CD14-positive monocyte (primary cell): ENCODE measurements at regions of chr3 and their contacts with region 1.

Region 1: GRCh38 chr3:71725279-71725991 is at the start of gene EIF4E3:
- DNase-seq: peak in 2 of 3 donors; percentile 44 to 62
- H3K4me3 ChIP-seq: peak within 1 kb of the TSS; percentile 60 to 97 (median 94)
- H3K4me3 Mint-ChIP-seq: peak within 1 kb of the TSS; percentile 89 to 93
- H3K27ac ChIP-seq: peak within 1 kb of the TSS; percentile 51 to 91
- H3K27ac Mint-ChIP-seq: peak within 1 kb of the TSS; percentile 84 to 97 (median 94)
- H3K4me1 ChIP-seq: peaks cover 54 to 65% of the 10 kb centered on the region in 2 donors
- H3K4me1 Mint-ChIP-seq: peaks cover 68% of the 10 kb centered on the region
- H3K27me3 ChIP-seq: peaks cover 0 to 3% of the 10 kb centered on the region in 2 donors
- H3K27me3 Mint-ChIP-seq: peaks cover under 1 to 6% (median 4%) of the 10 kb centered on the region in 3 donors
- CTCF ChIP-seq: no peak
- polyA plus RNA-seq, gene EIF4E3: 35.6 to 111 (median 58.6) TPM

Region 2: DNA sequence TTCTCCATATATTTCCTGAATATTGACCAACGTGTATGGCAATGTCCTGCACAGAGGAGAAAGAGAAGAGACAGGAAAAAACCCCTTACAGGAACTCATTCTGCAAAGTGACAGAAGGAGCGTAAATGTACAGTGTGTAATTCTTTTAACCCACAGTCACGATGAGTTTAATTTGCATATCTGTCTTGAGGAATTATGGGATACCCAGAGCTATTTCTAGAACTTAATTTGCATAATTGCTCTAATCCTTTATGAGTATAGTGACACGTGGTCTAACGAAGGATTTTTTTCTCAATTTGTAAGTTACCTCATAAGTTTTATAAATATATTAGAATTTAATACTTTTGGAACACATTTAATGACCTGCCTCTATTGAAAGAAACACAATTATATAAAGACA is 38.0 kb after region 1 on chr3:
- intact Hi-C with region 1: loop called in 1 of 2 experiments (anchors 5 kb)
- DNase-seq: no peak
- H3K4me3 ChIP-seq: no peak overlapping the region
- H3K4me3 Mint-ChIP-seq: no peak overlapping the region
- H3K27ac ChIP-seq: no peak overlapping the region
- H3K27ac Mint-ChIP-seq: no peak overlapping the region
- H3K4me1 ChIP-seq: peaks cover 9 to 19% of the 10 kb centered on the region in 2 donors
- H3K4me1 Mint-ChIP-seq: peaks cover 22% of the 10 kb centered on the region
- H3K27me3 ChIP-seq: no peaks in the 10 kb centered on the region
- H3K27me3 Mint-ChIP-seq: peaks cover 0 to 7% (median 2%) of the 10 kb centered on the region in 3 donors
- CTCF ChIP-seq: no peak

Region 3: DNA sequence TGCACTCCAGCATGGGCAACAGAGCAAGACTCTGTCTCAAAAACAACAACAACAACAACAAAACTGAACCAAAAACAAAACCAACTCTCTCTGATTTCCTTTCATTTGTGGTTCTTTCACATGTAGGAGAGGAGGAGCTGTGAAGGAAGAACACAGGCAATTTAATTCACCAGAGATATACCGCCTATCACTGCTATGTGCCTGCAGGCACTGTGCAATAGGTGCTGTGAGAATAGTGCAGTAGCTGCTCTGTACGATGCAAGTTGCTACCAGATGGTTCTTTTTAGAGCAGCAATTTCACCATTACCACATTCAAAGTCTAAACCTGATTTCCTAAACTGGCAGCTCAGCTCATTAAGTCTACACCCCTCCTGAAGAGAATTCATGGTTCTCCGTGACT is 70.9 kb after region 1 on chr3:
- intact Hi-C with region 1: no loop called
- DNase-seq: no peak
- H3K4me3 ChIP-seq: no peak overlapping the region
- H3K4me3 Mint-ChIP-seq: no peak overlapping the region
- H3K27ac ChIP-seq: no peak overlapping the region
- H3K27ac Mint-ChIP-seq: no peak overlapping the region
- H3K4me1 ChIP-seq: peaks cover 0 to 16% of the 10 kb centered on the region in 2 donors
- H3K4me1 Mint-ChIP-seq: peaks cover 23% of the 10 kb centered on the region
- H3K27me3 ChIP-seq: no peaks in the 10 kb centered on the region
- H3K27me3 Mint-ChIP-seq: peaks cover 1 to 9% (median 2%) of the 10 kb centered on the region in 3 donors
- CTCF ChIP-seq: no peak

Region 4: DNA sequence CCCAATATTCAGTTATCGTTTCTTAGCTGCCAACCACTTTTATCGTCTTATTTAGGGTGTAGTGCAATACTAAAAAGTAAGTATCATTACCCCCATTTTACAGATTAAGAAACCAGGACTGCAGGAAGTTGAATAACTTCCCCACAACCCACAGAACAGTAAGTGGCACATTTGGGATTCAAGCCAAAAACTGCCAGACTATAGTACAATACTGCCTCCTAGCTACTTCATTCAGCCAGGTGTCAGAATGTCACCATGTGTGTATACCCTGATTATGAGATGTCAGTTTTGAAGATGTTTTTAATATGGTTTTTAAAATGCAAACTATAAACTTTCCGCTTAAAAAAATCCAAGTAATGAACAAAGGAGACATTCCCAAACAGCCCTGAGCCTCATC is 133.7 kb after region 1 on chr3:
- intact Hi-C with region 1: loop called (anchors 5 kb)
- DNase-seq: peak; percentile 78 to 93 (median 83)
- H3K4me3 ChIP-seq: peak overlapping the region in 1 of 3 experiments; percentile 26
- H3K4me3 Mint-ChIP-seq: peak overlapping the region; percentile 6 to 57
- H3K27ac ChIP-seq: peak overlapping the region in 1 of 2 donors; percentile 18
- H3K27ac Mint-ChIP-seq: peak overlapping the region; percentile 73 to 95 (median 84)
- H3K4me1 ChIP-seq: peaks cover 14 to 27% of the 10 kb centered on the region in 2 donors
- H3K4me1 Mint-ChIP-seq: peaks cover 28% of the 10 kb centered on the region
- H3K27me3 ChIP-seq: peaks cover under 1 to 4% of the 10 kb centered on the region in 2 donors
- H3K27me3 Mint-ChIP-seq: peaks cover 4 to 13% (median 5%) of the 10 kb centered on the region in 3 donors
- CTCF ChIP-seq: peak; percentile 77

Region 5: DNA sequence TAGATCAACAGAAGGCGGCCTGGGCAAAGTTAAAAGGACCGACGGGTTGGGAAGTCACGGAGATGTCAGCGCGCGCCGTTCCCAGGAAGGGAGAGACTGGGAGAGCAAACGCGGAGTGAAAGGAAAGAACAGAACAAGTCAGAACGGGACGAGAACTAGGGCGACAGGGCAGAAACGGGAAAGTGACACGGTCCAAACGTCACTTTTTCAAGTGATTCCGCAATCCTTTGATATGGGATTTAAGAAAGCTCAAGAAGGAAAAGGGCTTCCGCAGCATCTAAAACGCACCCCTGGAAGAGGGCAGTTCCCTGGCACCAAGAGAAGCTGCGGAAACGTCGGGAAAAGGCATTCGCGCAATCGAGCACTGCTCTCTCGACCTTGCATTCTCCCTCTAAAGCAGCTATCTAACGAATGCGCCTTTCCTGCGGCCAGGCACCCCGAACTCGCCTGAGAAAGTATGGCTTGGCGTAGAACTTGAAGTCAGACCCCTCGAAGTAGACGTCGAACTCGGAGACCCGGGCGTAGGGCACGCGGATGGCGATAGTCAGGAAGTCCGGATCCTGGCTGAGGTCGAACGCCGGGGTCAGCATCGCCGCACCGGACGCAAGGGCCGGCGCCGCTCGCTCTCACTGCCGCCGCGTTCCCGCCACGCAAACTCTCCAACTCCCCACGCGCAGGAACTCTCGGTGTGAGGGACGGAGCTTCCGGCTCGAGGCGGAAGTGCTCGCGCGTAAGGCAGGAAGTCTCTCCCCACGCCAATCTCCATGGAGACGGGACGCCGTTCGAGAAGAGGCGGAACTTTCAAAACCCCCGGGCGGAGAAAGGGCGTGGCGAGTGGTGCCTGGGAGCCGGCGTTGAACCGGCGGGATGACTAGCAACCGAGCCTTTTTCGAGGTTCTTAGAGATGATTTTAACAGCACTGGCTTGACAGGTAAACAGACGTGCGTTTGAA is 1122.6 kb after region 1 on chr3 and contains the start of gene SHQ1:
- intact Hi-C with region 1: loop called in 1 of 2 experiments (anchors 10 kb)
- DNase-seq: peak; percentile 94 to 97 (median 96)
- H3K4me3 ChIP-seq: peak within 1 kb of the TSS; percentile 86 to 96 (median 86)
- H3K4me3 Mint-ChIP-seq: peak within 1 kb of the TSS; percentile 94 to 100
- H3K27ac ChIP-seq: peak within 1 kb of the TSS; percentile 71
- H3K27ac Mint-ChIP-seq: peak within 1 kb of the TSS; percentile 58 to 94 (median 93)
- H3K4me1 ChIP-seq: peaks cover 21 to 25% of the 10 kb centered on the region in 2 donors
- H3K4me1 Mint-ChIP-seq: peaks cover 35% of the 10 kb centered on the region
- H3K27me3 ChIP-seq: no peaks in the 10 kb centered on the region
- H3K27me3 Mint-ChIP-seq: peaks cover 0 to 2% (median 0%) of the 10 kb centered on the region in 3 donors
- CTCF ChIP-seq: no peak
- polyA plus RNA-seq, gene SHQ1: 3.5 to 31.6 (median 8.2) TPM